CD8-positive, alpha-beta T cell (primary cell): ENCODE measurements at regions of chr13 and their contacts with region 1.

Region 1: DNA sequence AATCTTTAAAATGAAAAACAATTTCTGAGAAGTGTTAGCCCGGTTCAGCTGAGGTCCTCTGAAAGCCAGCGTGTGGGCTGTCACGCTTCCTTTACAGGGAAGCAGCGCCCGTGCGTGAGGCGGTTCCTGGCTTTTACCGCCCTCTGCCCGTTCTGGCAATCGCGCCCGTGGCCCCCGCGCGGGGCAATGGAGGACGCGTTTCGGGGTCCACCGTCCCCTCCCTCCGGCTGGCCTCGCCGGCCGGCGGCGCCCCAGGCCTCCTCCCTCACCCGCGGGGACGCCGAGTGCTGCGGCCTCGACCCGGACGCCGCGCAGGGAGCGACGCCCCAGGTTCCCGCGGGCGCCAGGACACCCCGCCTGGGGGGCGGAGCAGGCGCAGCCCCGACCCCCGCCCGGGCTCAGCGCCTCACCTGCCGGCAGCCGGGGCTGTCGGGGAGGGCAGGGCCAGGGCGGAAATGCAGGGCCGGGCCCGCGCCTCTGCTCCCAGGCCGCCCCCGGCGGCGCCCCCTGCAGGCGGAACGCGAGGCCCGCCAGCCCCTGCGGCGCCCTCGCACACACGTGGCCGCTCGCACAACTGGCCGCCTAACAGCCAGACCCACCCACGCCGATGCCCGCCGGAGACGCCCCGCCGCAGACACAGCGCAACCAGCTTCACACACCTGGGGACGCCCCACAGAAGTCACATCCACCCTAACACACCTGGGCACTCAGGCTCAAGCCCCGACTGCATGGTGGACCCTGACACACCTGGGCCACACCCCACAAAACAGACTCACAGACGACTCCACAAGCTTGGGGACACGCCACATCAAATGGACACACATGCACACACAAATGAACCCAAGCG is at the start of gene GGACT:
- DNase-seq: peak; percentile 68 to 93 (median 85)
- ATAC-seq: peak; percentile 95
- H3K4me3 ChIP-seq: peak within 1 kb of the TSS; percentile 65 to 70
- H3K4me3 Mint-ChIP-seq: peak within 1 kb of the TSS; percentile 84
- H3K27ac ChIP-seq: peak within 1 kb of the TSS; percentile 80 to 82
- H3K27ac Mint-ChIP-seq: peak within 1 kb of the TSS; percentile 89
- H3K4me1 ChIP-seq: peaks cover 39% of the 10 kb centered on the region
- H3K4me1 Mint-ChIP-seq: peaks cover 44% of the 10 kb centered on the region
- H3K27me3 ChIP-seq: no peaks in the 10 kb centered on the region
- H3K27me3 Mint-ChIP-seq: no peaks in the 10 kb centered on the region
- CTCF ChIP-seq: peak; percentile 74
- total RNA-seq, gene GGACT: 0.98 to 1.1 TPM

Region 2: GRCh38 chr13:99289674-99290337 is 1298.7 kb before region 1 on chr13:
- CTCF ChIA-PET with region 1: no interaction called
- POLR2A ChIA-PET with region 1: no interaction called
- intact Hi-C with region 1: loop called in 1 of 2 experiments (anchors 5 kb)
- DNase-seq: peak in 6 of 9 experiments; percentile 45 to 87 (median 72)
- ATAC-seq: peak; percentile 90
- H3K4me3 ChIP-seq: no peak overlapping the region
- H3K4me3 Mint-ChIP-seq: peak overlapping the region; percentile 39
- H3K27ac ChIP-seq: peak overlapping the region in 1 of 2 experiments; percentile 39
- H3K27ac Mint-ChIP-seq: peak overlapping the region; percentile 62
- H3K4me1 ChIP-seq: peaks cover 50% of the 10 kb centered on the region
- H3K4me1 Mint-ChIP-seq: peaks cover 83% of the 10 kb centered on the region
- H3K27me3 ChIP-seq: no peaks in the 10 kb centered on the region
- H3K27me3 Mint-ChIP-seq: no peaks in the 10 kb centered on the region
- CTCF ChIP-seq: no peak